Right ventricle myocardium superior (tissue), 1 donor: ENCODE measurements at regions of chr20 and their contacts with region 1.

Region 1: GRCh38 chr20:13139459-13140150 is 81.5 kb upstream of the ISM1 start:
- DNase-seq: no peak
- ATAC-seq: no peak

Region 2: DNA sequence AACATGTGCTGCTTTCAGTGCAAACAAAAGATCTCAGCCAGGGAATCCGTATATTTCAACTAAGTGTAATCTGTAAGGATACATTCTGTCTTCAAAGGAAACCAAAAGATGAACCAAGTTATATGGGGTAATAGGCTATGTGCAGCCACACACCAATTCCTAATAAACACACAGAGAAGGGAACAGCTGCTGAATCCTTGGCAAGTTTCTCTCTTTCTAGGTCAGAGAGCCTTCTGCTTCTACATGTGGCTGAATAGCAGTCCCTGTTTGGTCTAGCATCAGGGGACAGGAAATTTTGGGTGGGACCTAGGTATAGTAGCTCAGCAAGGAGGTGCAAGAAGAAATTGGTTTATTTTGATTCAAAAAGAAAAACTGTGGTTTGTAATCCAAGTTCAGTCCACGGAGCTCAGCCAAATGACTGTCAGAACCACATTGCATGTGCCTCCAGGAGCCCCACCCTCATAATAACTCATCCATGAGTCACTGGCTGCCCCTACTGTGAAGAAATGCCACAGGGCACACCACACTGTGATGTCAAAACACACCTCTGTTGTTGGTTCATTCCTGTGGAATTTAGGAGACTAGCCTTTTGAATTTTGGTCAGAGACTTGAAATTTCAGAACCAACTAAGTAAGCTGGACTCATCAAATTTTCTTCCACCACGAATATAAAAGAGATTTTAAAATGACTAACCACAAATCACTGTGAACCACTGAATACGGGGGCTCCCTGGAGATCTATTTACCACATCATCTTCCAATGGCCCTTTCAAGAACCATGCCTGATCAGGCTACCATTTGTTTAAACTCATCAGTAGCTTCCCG is 109.7 kb before region 1 on chr20:
- intact Hi-C with region 1: no loop called
- DNase-seq: no peak
- ATAC-seq: no peak

Region 3: DNA sequence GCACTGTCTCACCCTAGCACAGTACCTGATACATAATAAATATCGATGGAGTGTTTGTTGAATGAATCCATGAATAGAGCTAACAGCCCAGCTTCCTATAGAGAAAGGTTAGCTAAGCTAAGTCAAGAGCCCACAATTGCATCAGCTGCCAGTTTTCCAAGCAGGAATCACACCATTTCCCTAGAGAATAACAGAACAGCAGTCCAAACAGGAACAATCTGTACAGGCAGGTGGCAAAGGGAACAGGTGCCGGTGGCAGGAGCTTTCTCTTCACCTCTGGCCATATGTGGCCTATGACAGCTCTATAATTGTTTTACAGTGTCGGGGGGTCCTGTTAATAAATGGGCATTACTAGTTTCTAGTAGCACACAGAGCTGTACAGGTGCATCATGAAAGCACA is 120.3 kb after region 1 on chr20:
- intact Hi-C with region 1: loop called (anchors 10 kb)
- DNase-seq: no peak
- ATAC-seq: no peak